GM12878 (cell line): ENCODE measurements at regions of chr10 and their contacts with region 1.

Region 1: DNA sequence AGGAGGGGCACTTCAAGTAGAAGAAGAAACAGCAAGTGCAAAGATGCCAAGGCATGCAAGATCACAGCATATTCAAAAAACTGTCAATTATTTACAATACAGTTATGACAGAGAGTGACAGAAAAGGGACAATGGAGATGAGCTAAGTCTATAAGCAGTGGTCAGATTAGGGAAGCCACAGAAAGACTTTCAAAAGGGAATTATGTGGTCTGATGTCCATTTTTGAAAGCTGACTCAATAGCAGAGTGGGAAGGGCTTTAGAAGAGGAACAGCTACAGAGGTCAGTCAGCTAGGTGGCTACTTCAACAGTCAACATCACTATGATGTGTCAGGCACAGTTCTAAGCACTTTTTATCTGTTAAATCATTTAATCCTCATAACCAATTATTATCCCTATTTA is 45.2 kb upstream of the SPOCK2 start:
- DNase-seq: peak; percentile 92
- ATAC-seq: peak; percentile 91
- H3K4me3 ChIP-seq: 0 out of 2 replicates have a peak overlapping the region, but pooled peaks have one; percentile 4
- H3K27ac ChIP-seq: peak overlapping the region; percentile 75
- H3K4me1 ChIP-seq: peaks cover 42% of the 10 kb centered on the region
- H3K27me3 ChIP-seq: no peaks in the 10 kb centered on the region
- CTCF ChIP-seq: no peak
- EP300 ChIP-seq: peak; percentile 84 to 96; a peak in 3 of 4 replicates
- POLR2A ChIP-seq: no peak
- RAD21 ChIP-seq: no peak

Region 2: DNA sequence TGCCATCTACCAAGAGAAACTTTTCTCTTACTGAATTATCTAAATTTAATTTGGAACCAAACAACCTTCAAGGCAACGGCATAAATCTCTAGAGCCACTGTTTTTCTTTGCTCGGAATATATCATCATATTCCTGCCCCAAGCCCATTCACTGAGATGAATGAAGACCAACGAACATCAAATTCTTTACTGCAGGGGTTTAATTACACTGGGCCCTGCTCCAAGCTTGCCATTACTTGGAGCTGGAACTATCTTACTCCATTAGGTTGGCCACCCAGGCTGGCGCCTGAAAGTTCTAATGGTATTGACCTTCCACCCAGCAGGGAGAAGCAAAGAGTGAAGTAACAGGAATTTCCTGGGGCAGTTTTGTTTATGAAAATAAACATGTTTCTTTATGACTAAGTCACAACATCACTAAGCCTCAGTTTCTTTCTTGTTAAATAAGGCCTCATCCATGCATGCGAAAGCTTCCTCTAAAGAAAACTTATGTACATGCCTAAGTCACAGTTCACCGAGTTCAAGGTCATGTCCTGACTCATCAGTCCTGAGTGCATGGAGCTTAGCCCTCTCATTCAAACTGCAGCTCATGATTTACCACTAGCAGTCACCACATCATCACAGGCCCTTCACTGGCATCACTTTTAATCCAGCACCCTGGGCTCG is 40.2 kb after region 1 on chr10:
- CTCF ChIA-PET with region 1: interaction called, 22 read pairs
- POLR2A ChIA-PET with region 1: interaction called, 9 read pairs
- RAD21 ChIA-PET with region 1: interaction called, 25 read pairs
- SMC1A ChIA-PET with region 1: interaction called, 47 read pairs
- in situ Hi-C with region 1: no loop called
- intact Hi-C with region 1: loop called (anchors 2 kb)
- DNase-seq: peak; percentile 86
- ATAC-seq: peak; percentile 91
- H3K4me3 ChIP-seq: no peak overlapping the region; the same call in 1 of the 2 replicates
- H3K27ac ChIP-seq: peak overlapping the region; percentile 67
- H3K4me1 ChIP-seq: peaks cover 35% of the 10 kb centered on the region
- H3K27me3 ChIP-seq: no peaks in the 10 kb centered on the region
- CTCF ChIP-seq: no peak
- EP300 ChIP-seq: no peak
- POLR2A ChIP-seq: no peak
- RAD21 ChIP-seq: no peak

Region 3: GRCh38 chr10:72223743-72224101 is 90.2 kb after region 1 on chr10:
- CTCF ChIA-PET with region 1: interaction called, 127 read pairs
- POLR2A ChIA-PET with region 1: interaction called, 18 read pairs
- RAD21 ChIA-PET with region 1: interaction called, 89 read pairs
- SMC1A ChIA-PET with region 1: interaction called, 122 read pairs
- in situ Hi-C with region 1: no loop called
- intact Hi-C with region 1: loop called (anchors 2 kb)
- DNase-seq: no peak
- ATAC-seq: peak; percentile 71
- H3K4me3 ChIP-seq: no peak overlapping the region
- H3K27ac ChIP-seq: peak overlapping the region; percentile 47
- H3K4me1 ChIP-seq: peaks cover 29% of the 10 kb centered on the region
- H3K27me3 ChIP-seq: no peaks in the 10 kb centered on the region
- CTCF ChIP-seq: no peak
- EP300 ChIP-seq: no peak
- POLR2A ChIP-seq: no peak
- RAD21 ChIP-seq: no peak

Region 4: DNA sequence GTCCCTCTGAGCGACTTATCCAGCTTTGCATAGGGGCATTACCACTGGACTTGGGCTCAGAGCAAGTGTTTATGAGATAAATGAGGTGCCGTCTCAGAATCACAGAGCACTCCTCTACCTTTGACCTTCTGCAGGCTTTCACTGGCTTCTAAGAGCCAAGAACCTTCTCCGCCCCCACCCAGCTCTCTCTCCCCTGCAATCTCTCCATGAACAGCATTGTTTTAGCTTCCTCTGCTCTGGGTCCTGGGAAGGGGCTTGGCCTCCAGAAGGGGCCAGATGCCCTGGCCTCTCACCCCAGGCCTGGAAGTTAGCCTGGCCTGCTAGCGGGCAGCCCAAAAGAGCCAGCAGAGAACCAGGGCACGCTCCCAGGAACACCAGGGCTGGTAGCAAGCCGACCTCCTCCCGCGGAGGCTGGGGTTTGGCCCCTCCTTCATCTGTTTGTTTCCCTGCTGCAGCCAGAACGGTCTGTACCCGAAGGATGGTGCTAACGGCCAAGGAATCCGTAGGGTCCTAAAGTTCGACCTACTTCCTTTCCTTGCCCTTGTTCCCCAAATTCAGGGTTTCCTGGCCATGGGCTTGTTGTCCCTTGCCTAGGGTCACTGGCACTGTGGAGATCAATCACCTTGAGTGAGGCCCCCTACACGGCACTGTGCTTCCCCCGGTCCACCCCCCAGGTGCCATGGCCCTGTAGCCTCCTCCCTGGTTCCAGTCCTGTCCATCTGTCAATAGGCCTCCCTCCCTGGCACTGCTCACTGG is 121.5 kb after region 1 on chr10:
- CTCF ChIA-PET with region 1: interaction called, 24 read pairs
- POLR2A ChIA-PET with region 1: interaction called, 12 read pairs
- RAD21 ChIA-PET with region 1: interaction called, 46 read pairs
- SMC1A ChIA-PET with region 1: interaction called, 10 read pairs
- in situ Hi-C with region 1: no loop called
- intact Hi-C with region 1: no loop called
- DNase-seq: no peak
- ATAC-seq: peak; percentile 73
- H3K4me3 ChIP-seq: peak overlapping the region; percentile 10; the same call in 1 of the 2 replicates
- H3K27ac ChIP-seq: peak overlapping the region; percentile 90
- H3K4me1 ChIP-seq: peaks cover 72% of the 10 kb centered on the region
- H3K27me3 ChIP-seq: no peaks in the 10 kb centered on the region
- CTCF ChIP-seq: peak in 1 of 3 experiments; percentile 33; a peak in 2 of 6 replicates
- EP300 ChIP-seq: no peak
- POLR2A ChIP-seq: peak; percentile 69
- RAD21 ChIP-seq: peak; percentile 40

Region 5: GRCh38 chr10:72297968-72298773 is 164.7 kb after region 1 on chr10:
- CTCF ChIA-PET with region 1: interaction called, 6 read pairs
- POLR2A ChIA-PET with region 1: interaction called, 5 read pairs
- RAD21 ChIA-PET with region 1: interaction called, 8 read pairs
- SMC1A ChIA-PET with region 1: interaction called, 6 read pairs
- in situ Hi-C with region 1: no loop called
- intact Hi-C with region 1: loop called (anchors 1 kb)
- DNase-seq: peak; percentile 91
- ATAC-seq: peak; percentile 84
- H3K4me3 ChIP-seq: peak overlapping the region; percentile 80
- H3K27ac ChIP-seq: peak overlapping the region; percentile 100
- H3K4me1 ChIP-seq: peaks cover 40% of the 10 kb centered on the region
- H3K27me3 ChIP-seq: no peaks in the 10 kb centered on the region
- CTCF ChIP-seq: no peak
- EP300 ChIP-seq: peak in 1 of 2 experiments; percentile 24; a peak in 1 of 4 replicates
- POLR2A ChIP-seq: peak; percentile 83
- RAD21 ChIP-seq: no peak

Region 6: DNA sequence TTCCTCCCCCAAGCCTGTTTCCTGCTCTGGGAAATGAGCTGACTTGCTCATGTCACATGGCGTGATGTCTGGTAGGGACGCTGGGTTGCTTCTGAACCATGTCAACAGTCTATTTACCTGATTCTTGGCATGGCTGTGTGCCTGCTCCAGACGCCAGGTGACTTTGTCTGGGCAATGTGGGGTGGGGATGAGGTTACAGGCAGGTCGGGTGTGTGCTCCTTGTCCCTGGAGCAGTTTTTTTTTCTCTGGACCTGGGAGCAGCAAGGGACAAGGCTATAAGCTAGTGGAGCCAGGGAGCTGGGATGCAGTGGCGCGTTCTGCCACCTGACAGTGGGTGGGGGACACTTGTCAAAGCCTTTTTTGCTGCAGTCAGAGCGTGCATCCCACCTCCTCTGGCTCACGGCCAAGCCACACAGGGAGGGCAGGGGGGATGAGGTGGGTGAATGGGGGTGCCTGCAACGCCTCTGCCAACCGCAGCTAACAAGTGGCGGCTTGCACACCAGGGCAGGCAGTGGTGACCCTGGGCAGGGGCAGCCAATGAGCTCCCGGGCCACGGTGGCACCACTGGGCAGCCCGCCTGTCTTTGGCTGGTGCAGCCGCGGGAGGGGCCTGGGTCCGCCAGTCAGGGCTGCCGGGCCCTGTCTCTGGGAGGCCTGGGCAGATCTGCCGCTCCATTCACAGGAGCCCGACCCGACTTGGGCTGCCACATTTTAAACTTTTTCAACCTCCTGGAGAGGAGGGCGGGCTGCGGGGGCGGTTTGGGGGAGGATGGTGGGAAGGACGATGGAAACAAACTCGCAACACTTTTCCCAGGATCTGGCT is 198.3 kb after region 1 on chr10:
- CTCF ChIA-PET with region 1: interaction called, 127 read pairs
- POLR2A ChIA-PET with region 1: interaction called, 9 read pairs
- RAD21 ChIA-PET with region 1: interaction called, 76 read pairs
- SMC1A ChIA-PET with region 1: interaction called, 168 read pairs
- in situ Hi-C with region 1: loop called (anchors 5 kb)
- intact Hi-C with region 1: loop called (anchors 1 kb)
- DNase-seq: peak; percentile 96
- ATAC-seq: peak; percentile 80
- H3K4me3 ChIP-seq: 0 out of 2 replicates have a peak overlapping the region, but pooled peaks have one; percentile 4
- H3K27ac ChIP-seq: peak overlapping the region; percentile 95
- H3K4me1 ChIP-seq: peaks cover 76% of the 10 kb centered on the region
- H3K27me3 ChIP-seq: no peaks in the 10 kb centered on the region
- CTCF ChIP-seq: peak; percentile 1 to 50 (median 13); a peak in 1 of 6 replicates
- EP300 ChIP-seq: peak; percentile 31 to 85; a peak in 3 of 4 replicates
- POLR2A ChIP-seq: peak; percentile 68
- RAD21 ChIP-seq: no peak

Region 7: DNA sequence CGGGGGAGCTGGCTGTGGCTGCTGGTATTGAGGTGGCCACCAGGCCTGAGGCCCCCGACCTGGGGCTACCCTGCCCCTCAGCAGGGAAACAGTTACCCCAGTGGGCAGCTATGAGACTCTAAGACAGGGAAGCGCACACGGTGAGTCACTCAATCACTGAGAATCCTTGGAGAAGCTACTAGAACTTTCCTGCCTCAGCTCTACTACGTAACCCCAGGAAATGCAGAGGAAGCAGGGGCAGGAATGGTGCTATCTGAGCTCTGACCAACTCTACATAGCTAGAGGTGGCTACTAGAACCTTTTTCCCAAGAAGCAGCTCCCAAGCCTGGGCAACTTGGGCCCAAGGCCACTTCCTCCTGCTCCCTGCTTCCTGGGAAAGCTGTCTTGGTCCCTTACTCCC is 209.4 kb after region 1 on chr10:
- CTCF ChIA-PET with region 1: interaction called, 127 read pairs
- POLR2A ChIA-PET with region 1: interaction called, 9 read pairs
- RAD21 ChIA-PET with region 1: interaction called, 76 read pairs
- SMC1A ChIA-PET with region 1: interaction called, 168 read pairs
- in situ Hi-C with region 1: loop called (anchors 5 kb)
- intact Hi-C with region 1: no loop called
- DNase-seq: no peak
- ATAC-seq: no peak
- H3K4me3 ChIP-seq: no peak overlapping the region
- H3K27ac ChIP-seq: no peak overlapping the region
- H3K4me1 ChIP-seq: peaks cover 19% of the 10 kb centered on the region
- H3K27me3 ChIP-seq: no peaks in the 10 kb centered on the region
- CTCF ChIP-seq: no peak
- EP300 ChIP-seq: no peak
- POLR2A ChIP-seq: no peak
- RAD21 ChIP-seq: no peak